Caco-2 (cell line): ENCODE measurements at regions of chr11 and their contacts with region 1.

Region 1: GRCh38 chr11:65251476-65251875 is 10.3 kb upstream of the POLA2 start:
- DNase-seq: no peak
- H3K4me3 ChIP-seq: no peak overlapping the region
- H3K4me3 Mint-ChIP-seq: no peak overlapping the region
- H3K27ac Mint-ChIP-seq: no peak overlapping the region
- H3K4me1 ChIP-seq: peaks cover 12% of the 10 kb centered on the region
- H3K4me1 Mint-ChIP-seq: peaks cover 3% of the 10 kb centered on the region
- H3K27me3 ChIP-seq: no peaks in the 10 kb centered on the region
- H3K27me3 Mint-ChIP-seq: no peaks in the 10 kb centered on the region
- CTCF ChIP-seq: no peak

Region 2: GRCh38 chr11:65182258-65183170 is 69.0 kb before region 1 on chr11:
- CTCF ChIA-PET with region 1: no interaction called
- POLR2A ChIA-PET with region 1: no interaction called
- intact Hi-C with region 1: no loop called
- DNase-seq: peak; percentile 68 to 74
- H3K4me3 ChIP-seq: peak overlapping the region; percentile 84
- H3K4me3 Mint-ChIP-seq: peak overlapping the region; percentile 85
- H3K27ac Mint-ChIP-seq: peak overlapping the region; percentile 90
- H3K4me1 ChIP-seq: peaks cover 13% of the 10 kb centered on the region
- H3K4me1 Mint-ChIP-seq: no peaks in the 10 kb centered on the region
- H3K27me3 ChIP-seq: no peaks in the 10 kb centered on the region
- H3K27me3 Mint-ChIP-seq: no peaks in the 10 kb centered on the region
- CTCF ChIP-seq: no peak

Region 3: DNA sequence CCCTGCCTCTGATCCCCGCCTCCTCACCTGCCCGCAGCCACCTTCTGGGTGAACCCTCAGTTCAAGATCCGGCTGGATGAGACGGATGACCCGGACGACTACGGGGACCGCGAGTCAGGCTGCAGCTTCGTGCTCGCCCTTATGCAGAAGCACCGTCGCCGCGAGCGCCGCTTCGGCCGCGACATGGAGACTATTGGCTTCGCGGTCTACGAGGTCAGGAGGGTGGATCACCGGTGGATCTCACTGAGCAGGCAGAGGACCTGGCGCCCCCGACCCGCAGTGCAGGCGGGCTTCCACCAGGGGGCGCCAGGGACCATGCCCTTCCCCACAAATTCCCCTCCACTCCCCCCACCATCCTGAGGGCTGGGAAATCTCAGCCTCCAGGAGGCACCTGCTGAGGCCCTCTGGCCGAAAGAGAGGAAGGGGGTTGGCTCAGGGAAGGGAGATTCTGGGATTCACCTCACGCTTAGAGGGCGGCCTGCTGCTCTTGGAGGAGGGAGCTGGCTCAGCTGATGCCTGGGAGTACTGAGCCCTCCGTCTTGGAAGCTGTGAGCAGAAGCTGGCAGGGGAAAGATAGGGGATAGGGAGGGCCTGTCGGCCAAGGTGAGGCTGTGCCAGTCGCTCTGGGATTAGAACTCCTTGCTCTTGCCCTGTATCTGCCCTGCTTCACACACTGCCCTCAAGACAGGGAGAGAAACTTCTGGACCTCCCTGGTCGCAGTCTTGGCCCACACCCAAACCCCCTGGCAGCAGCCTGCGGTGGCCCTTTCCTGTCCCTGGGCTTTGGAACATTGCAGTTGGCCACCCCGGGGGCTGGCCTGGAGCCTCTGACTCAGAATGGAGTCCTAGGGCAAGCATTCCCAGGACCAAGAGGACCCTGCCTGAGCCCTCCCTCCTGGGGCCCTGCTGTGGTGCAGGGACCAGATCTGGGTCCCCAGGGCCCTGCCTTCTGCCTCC is 46.6 kb before region 1 on chr11:
- CTCF ChIA-PET with region 1: interaction called, 8 read pairs
- POLR2A ChIA-PET with region 1: no interaction called
- intact Hi-C with region 1: loop called (anchors 1 kb)
- DNase-seq: peak in 1 of 2 experiments; percentile 73
- H3K4me3 ChIP-seq: no peak overlapping the region
- H3K4me3 Mint-ChIP-seq: no peak overlapping the region
- H3K27ac Mint-ChIP-seq: peak overlapping the region; percentile 74
- H3K4me1 ChIP-seq: peaks cover 7% of the 10 kb centered on the region
- H3K4me1 Mint-ChIP-seq: peaks cover 2% of the 10 kb centered on the region
- H3K27me3 ChIP-seq: no peaks in the 10 kb centered on the region
- H3K27me3 Mint-ChIP-seq: no peaks in the 10 kb centered on the region
- CTCF ChIP-seq: peak; percentile 95 to 98

Region 4: GRCh38 chr11:65290448-65291165 is 39.1 kb after region 1 on chr11:
- CTCF ChIA-PET with region 1: no interaction called
- POLR2A ChIA-PET with region 1: no interaction called
- intact Hi-C with region 1: no loop called
- DNase-seq: no peak
- H3K4me3 ChIP-seq: no peak overlapping the region
- H3K4me3 Mint-ChIP-seq: peak overlapping the region; percentile 83
- H3K27ac Mint-ChIP-seq: peak overlapping the region; percentile 97
- H3K4me1 ChIP-seq: peaks cover 47% of the 10 kb centered on the region
- H3K4me1 Mint-ChIP-seq: peaks cover 46% of the 10 kb centered on the region
- H3K27me3 ChIP-seq: no peaks in the 10 kb centered on the region
- H3K27me3 Mint-ChIP-seq: no peaks in the 10 kb centered on the region
- CTCF ChIP-seq: no peak